Activated CD4-positive, alpha-beta memory T cell treated with anti-CD3 and anti-CD28 coated beads, Interleukin-2, amount 10 ng/mL, durations not matched to agents 7 days and 5 days (primary cell): ENCODE measurements at regions of chr1 and their contacts with region 1.

Region 1: GRCh38 chr1:153946622-153947241 is at the start of gene DENND4B:
- DNase-seq: peak; percentile 77
- H3K4me3 Mint-ChIP-seq: peak within 1 kb of the TSS; percentile 92
- H3K27ac Mint-ChIP-seq: peak within 1 kb of the TSS; percentile 99
- H3K4me1 Mint-ChIP-seq: peaks cover 35% of the 10 kb centered on the region
- H3K27me3 Mint-ChIP-seq: no peaks in the 10 kb centered on the region
- total RNA-seq, gene DENND4B: 159 to 166 TPM

Region 2: GRCh38 chr1:153827168-153827964 is 119.4 kb before region 1 on chr1:
- CTCF ChIA-PET with region 1: interaction called, 20 read pairs
- POLR2A ChIA-PET with region 1: interaction called, 16 read pairs
- DNase-seq: no peak
- H3K4me3 Mint-ChIP-seq: no peak overlapping the region
- H3K27ac Mint-ChIP-seq: no peak overlapping the region
- H3K4me1 Mint-ChIP-seq: no peaks in the 10 kb centered on the region
- H3K27me3 Mint-ChIP-seq: no peaks in the 10 kb centered on the region

Region 3: DNA sequence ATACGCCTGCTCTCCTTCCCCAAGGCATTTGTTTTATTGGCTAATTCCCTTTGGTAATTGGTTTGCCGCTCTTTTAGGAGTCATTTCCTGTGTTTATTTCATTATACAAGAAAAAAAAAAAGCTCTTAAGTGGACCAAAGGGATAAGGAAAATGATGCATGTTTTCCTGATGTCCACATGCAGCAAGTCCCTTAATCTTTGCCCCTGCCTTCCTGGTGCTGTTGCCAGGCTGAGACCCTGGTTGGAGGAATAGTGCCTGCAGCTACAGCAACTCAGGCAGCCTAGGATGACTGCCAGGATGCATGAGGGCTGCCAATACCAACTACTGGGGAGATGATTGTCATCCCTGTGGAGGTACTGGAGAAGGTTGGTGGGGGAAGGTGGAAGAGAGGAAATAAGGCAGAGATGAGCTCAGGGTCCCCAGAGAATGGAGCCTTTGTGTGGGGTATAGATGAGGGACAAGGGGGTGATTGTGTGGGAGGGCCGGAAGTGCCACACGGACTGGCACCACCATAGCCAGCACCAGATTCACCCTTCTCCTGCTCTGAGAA is 17.9 kb before region 1 on chr1:
- CTCF ChIA-PET with region 1: interaction called, 52 read pairs
- POLR2A ChIA-PET with region 1: interaction called, 165 read pairs
- DNase-seq: no peak
- H3K4me3 Mint-ChIP-seq: no peak overlapping the region
- H3K27ac Mint-ChIP-seq: no peak overlapping the region
- H3K4me1 Mint-ChIP-seq: peaks cover 12% of the 10 kb centered on the region
- H3K27me3 Mint-ChIP-seq: no peaks in the 10 kb centered on the region

Region 4: GRCh38 chr1:153967082-153968000 is 20.6 kb after region 1 on chr1 and contains the start of gene CREB3L4:
- CTCF ChIA-PET with region 1: interaction called, 36 read pairs
- POLR2A ChIA-PET with region 1: interaction called, 97 read pairs
- DNase-seq: peak; percentile 87
- H3K4me3 Mint-ChIP-seq: peak within 1 kb of the TSS; percentile 80
- H3K27ac Mint-ChIP-seq: peak within 1 kb of the TSS; percentile 84
- H3K4me1 Mint-ChIP-seq: peaks cover 63% of the 10 kb centered on the region
- H3K27me3 Mint-ChIP-seq: no peaks in the 10 kb centered on the region
- total RNA-seq, gene CREB3L4: 7.0 to 8.4 TPM

Region 5: GRCh38 chr1:154183045-154183915 is 236.5 kb after region 1 on chr1:
- CTCF ChIA-PET with region 1: no interaction called
- POLR2A ChIA-PET with region 1: interaction called, 11 read pairs
- DNase-seq: peak; percentile 96
- H3K4me3 Mint-ChIP-seq: peak overlapping the region; percentile 99
- H3K27ac Mint-ChIP-seq: peak overlapping the region; percentile 99
- H3K4me1 Mint-ChIP-seq: peaks cover 45% of the 10 kb centered on the region
- H3K27me3 Mint-ChIP-seq: no peaks in the 10 kb centered on the region